HEK293T (cell line): ENCODE measurements at regions of chr20 and their contacts with region 1.

Region 1: DNA sequence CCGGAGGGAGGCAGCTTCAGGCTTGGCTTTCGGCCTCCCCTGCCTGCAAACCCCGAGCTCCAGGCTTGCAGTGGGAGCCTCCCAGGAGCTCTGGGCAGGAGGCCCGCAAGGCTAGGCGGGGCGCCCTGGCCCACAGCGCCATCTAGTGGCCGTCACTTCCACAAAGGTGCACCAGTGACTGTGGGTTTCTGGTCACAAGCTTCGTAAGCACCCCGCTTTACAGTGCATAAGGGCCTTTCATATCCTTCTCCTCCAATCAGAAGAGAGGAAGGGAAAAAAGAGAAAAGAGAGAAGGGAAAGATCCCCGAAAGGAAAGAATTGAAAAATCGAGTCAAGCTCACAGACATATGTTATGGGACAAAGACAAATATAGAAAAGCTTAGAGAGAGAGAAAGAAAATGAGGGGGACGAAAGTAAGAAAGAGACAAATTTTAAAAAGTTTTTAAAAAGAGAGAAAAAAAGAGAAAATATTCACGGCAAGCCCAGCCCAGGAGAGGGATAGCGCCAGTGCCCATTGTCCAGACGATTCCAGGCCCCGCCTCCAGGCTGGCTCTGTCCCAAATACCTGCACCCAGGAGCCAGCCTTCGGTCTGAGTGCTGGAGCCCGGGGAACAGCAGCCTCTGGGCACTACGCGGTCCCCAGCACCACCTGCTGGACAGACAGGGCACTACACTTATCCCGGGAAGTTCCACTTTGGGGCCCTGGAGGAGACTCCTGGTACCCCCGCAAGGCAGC is 207.1 kb downstream of the PREX1 start:
- DNase-seq: peak; percentile 89

Region 2: DNA sequence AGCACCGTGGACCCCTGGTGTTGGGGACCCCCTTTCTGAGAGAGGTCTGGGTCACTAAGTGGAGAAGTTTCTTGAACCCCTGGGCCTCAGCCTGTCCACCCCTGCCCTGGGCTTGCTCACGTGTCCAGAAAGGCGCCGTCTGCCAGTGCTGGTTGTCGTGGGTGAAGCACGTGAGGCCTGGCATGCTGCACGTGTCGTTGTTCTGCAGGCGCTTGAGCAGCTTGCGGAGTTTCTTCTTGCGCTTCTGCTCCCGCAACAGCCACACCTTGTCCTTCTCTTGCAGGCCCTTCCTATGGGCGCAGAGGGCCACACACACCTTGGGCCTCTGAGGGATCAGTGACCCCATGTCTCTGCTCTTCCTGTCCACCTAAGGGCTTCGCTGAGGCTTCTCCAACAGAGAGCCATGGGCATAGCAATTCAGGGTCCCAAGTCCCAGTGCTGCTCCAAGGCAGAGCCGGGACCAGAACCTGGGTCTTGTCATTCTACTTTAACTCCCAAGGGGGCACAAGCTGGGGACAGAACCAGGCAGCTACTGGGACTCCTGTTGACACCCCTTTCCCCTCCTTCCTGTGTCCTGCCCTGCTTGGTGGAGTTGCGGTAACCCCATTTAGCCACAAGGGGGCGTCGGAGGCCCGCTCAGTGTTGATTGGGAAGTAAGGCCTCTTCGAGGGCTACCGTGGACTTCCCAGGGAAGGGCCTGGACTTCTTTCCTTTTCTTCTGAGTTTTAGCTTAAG is 957.2 kb before region 1 on chr20:
- CTCF ChIA-PET with region 1: interaction called, 14 read pairs
- POLR2A ChIA-PET with region 1: no interaction called
- DNase-seq: peak; percentile 87

Region 3: DNA sequence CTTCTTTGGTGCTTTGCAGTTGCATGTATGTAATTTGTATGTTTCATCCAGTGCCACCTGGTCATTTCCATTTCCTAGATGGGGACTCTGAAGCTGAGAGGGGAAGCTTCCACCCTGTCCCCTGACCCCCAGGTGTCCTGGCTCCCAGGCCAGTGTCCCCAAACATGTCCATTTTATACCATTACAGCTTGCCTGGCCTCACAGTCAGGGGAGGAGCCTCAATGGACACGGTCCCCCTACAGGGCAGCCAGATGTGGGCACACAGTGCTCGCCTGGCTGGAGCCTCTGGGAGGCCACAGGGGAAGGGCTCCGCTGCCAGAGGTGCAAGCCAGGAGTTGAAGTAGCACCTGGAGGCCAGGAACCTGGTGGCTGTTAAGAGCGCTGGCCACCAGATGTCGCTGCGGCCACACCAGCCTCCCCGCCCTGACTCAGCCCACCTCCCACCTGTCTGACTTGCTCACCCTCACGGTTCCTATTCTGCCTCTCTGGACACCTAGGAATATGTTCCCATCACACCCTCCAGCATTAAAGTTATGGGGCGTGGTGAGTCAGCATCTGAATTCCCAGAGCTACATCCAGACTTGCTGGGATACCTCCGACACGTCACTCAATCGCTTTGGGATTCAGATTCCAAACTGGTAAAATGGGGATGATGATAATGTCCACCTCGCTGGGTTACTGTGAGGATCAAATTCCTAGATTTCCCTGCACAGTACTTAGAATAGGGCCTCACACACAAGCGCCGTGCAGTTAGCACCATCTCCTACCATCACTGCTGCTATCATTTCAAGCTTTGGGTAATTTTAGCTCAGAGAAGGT is 942.8 kb before region 1 on chr20:
- CTCF ChIA-PET with region 1: interaction called, 13 read pairs
- POLR2A ChIA-PET with region 1: no interaction called
- DNase-seq: peak; percentile 74

Region 4: DNA sequence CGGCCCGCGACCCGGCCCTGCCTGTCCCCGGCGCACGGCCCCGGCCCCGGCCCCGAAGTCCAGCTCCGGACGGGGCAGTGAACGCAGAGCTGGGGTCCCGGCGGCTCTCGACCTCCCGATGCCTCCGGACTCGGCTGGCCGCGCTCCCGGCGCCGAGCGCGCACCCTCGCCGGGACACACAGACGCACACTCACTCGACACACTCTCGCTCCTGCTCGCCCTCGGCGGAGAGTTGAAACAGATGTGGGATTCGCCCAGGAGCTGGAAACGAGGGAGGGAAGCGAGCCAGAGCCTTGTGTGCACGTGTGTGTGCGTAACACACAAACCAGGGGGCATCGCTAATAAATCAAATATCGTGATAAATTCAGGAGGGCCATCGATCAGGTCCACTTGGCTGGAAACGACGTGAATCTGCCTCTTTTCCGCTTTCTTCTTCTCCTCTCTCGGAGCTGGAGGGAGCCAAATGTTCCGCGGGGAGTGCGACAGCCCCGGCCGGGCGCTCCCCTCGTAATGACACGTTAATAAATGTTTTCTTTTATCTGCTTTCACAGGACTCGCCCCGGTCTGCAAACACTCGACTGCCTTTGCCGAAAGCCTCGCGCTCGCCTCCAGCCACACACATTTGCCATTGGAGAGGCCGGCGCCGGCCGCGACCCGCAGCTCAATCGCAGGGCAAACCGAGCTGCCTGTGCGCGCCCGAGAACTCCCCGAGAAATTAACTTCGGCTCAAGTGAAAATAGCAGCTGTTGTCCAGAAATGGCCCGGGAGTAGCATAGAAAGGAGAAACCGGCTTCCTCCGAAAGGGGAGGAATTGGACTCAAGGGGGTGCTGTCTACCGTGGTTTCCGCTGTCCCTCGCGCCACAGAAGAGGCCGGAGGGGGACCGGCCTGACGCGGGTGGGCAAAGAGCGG is 834.6 kb before region 1 on chr20:
- CTCF ChIA-PET with region 1: interaction called, 19 read pairs
- POLR2A ChIA-PET with region 1: no interaction called
- DNase-seq: peak; percentile 64

Region 5: GRCh38 chr20:48075741-48076488 is 544.8 kb before region 1 on chr20:
- CTCF ChIA-PET with region 1: no interaction called
- POLR2A ChIA-PET with region 1: no interaction called
- DNase-seq: no peak

Region 6: GRCh38 chr20:48722737-48723191 is 102.1 kb after region 1 on chr20:
- CTCF ChIA-PET with region 1: no interaction called
- POLR2A ChIA-PET with region 1: no interaction called
- DNase-seq: no peak